ENCODE measurements at regions of chr1 and their contacts with region 1.

Region 1: DNA sequence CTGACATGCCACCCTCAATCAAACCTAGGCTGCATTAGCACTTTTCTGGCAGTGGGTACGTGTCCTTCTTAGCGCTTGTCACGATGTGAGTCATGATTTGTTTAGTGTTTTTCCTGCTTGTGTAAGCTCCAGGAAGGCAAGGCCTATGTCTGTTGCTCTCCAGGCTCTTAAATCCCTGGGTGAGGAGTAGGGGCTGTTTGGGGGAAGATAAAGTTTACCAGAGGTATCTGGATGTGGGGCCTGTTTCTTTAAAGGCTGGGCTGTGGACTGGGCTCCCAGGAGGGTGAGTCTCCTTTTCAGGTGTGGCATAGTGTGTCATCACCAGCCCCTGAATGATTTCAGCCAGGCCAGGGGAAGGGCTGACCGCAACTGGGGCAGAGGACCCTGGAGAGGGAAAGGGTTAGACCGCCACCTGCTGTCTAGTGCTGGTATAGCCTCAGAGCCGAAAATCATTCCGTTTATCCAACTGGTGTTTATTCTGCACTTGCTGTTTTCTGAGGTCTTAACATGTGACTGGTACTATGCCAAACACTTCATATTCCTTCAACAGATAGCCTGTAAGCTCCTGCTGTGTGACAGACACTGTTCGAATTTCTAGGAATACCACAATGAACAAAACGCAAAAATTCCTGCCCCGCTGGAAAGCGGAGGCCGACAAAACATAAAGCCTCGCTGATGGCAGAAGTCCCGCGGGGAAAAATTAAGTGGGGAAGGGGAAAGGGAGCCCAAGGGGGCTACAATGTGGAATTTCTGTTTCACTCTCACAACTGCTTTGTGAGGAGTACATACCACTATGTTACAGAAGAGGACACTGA is 9.7 kb downstream of the SERINC2 start:
- DNase-seq: peak; percentile 74
- H3K4me3 Mint-ChIP-seq: no peak overlapping the region
- H3K27ac Mint-ChIP-seq: no peak overlapping the region
- H3K4me1 Mint-ChIP-seq: peaks cover 4% of the 10 kb centered on the region
- H3K27me3 Mint-ChIP-seq: peaks cover 45% of the 10 kb centered on the region

Region 2: DNA sequence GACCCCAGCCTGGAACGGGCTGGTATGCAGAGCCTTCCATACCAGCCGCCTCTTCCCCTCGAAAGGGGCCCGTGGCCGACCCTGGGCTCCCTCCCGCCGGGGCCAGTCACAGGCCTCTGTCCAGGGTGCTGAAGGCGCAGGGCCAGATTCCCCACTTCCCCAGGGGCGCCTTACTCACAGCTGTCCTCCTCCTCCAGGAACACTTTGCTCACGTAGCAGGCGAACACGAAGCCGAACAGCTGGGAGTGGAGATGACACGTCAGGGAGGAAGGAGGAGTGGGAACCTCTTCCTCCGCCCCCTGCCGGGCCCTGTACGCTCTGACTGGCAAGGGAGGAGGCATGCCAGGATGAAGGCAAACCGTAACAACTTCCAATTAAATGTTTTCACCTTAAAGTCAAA is 240.4 kb before region 1 on chr1:
- CTCF ChIA-PET with region 1: interaction called, 69 read pairs
- DNase-seq: peak; percentile 74
- H3K4me3 Mint-ChIP-seq: peak overlapping the region; percentile 45
- H3K27ac Mint-ChIP-seq: no peak overlapping the region
- H3K4me1 Mint-ChIP-seq: peaks cover 11% of the 10 kb centered on the region
- H3K27me3 Mint-ChIP-seq: peaks cover 57% of the 10 kb centered on the region

Region 3: DNA sequence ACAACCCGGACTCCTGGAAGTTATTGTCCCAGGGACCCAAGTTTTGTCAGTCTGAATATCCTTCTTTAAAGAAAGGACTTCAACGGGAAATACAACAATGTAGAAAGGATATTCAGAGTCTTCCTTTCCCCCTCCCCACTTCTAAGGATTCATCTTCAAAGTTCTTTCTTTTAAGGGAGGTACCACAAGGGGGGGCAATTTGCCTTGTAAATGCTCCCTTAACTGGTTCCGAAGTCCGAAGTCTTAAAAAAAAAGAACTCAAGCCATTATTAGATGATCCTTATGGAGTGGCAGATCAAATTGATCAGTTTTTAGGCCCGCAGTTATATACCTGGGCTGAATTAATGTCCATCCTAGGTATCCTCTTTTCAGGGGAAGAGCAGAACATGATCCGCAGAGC is 37.3 kb after region 1 on chr1:
- CTCF ChIA-PET with region 1: no interaction called
- DNase-seq: no peak
- H3K4me3 Mint-ChIP-seq: no peak overlapping the region
- H3K27ac Mint-ChIP-seq: no peak overlapping the region
- H3K4me1 Mint-ChIP-seq: no peaks in the 10 kb centered on the region
- H3K27me3 Mint-ChIP-seq: peaks cover 15% of the 10 kb centered on the region

Region 4: DNA sequence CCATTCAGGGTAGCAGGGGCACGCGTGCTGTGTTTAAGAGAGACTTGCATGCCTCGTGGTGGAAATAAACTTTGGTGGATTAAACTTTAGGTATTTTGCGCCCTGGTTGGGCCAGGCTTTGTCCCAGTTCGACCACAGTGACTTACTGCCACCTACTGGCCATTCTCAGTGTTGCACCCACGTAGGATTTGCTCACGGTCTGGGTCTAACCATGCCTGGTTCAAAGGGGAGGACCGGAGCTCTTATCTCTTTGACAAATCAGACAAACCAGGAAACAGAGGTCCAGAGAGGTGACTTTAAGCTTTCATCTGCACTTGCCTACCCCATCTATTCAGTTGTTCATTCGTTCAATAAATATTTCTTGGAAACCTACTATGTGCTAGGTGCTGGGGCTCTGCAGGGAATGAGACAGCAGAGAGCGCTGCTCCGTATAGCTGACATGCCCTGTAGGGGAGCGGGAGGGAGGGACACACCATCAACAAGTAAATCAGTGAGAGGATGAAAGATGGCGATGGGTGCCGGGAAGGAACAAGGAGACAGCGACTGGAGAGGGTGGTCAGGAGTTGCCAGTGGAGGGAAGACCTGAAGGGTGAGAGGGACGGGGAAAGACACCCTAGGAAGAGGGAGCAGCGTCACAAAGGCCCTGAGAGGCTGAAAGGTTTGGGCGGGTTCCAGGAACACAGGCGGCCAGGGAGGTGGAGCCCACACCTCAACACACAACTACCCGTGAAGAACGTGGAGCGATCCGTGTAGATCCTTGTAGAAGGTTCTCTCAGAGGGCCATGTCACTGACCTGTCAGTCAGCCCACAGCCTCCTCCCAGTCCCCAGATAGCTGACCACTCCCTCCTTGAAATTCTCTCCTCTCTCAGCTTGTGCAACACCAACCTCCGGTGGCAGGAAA is 126.4 kb after region 1 on chr1:
- CTCF ChIA-PET with region 1: interaction called, 23 read pairs
- DNase-seq: peak; percentile 94
- H3K4me3 Mint-ChIP-seq: peak overlapping the region; percentile 35
- H3K27ac Mint-ChIP-seq: no peak overlapping the region
- H3K4me1 Mint-ChIP-seq: peaks cover 11% of the 10 kb centered on the region
- H3K27me3 Mint-ChIP-seq: peaks cover 17% of the 10 kb centered on the region

Measured in activated naive CD4-positive, alpha-beta T cell treated with anti-CD3 and anti-CD28 coated beads, Interleukin-2, amount 10 ng/mL, durations not matched to agents 7 days and 5 days (primary cell).